Activated CD4-positive, alpha-beta memory T cell treated with anti-CD3 and anti-CD28 coated beads, Interleukin-2, amount 10 ng/mL, durations not matched to agents 7 days and 5 days (primary cell): ENCODE measurements at regions of chr10 and their contacts with region 1.

Region 1: DNA sequence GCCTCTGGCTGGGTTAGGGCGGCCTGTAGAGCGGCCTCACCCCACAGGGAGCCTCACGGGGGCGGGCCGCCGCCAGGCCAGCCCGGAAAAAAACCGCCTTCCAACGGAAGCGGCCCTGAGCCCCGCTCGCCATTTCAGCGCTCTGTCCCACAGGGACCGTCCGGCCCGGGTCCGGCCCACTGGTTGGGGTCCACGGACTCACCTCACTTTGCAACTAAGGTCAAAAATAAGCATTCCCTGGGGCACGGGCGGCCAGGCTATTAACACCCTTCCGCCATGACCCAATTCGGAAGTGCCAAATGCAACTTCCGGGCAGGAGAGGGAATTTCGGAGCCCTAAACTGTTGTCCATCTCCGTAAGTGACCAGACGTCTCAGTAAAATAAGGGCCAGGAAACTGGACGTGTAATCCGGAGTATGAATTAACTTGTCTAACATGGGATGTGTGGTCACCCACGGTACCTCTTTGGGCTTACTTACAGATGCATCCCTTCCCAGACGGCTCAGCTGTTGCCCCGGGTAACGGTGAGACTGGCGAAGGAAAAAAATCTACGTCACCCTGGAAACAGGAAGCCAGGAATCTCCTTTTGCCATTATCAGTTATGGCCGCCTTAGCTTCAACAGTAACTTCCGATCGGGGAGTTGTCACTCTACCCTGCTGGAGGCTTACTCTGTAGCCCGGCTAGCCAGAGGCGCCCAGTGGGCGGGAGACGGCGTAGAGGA is at the start of gene BBIP1:
- DNase-seq: no peak
- H3K4me3 Mint-ChIP-seq: peak within 1 kb of the TSS; percentile 90
- H3K27ac Mint-ChIP-seq: peak within 1 kb of the TSS; percentile 97
- H3K4me1 Mint-ChIP-seq: peaks cover 40% of the 10 kb centered on the region
- H3K27me3 Mint-ChIP-seq: no peaks in the 10 kb centered on the region
- total RNA-seq, gene BBIP1: 24.8 to 30.2 TPM

Region 2: DNA sequence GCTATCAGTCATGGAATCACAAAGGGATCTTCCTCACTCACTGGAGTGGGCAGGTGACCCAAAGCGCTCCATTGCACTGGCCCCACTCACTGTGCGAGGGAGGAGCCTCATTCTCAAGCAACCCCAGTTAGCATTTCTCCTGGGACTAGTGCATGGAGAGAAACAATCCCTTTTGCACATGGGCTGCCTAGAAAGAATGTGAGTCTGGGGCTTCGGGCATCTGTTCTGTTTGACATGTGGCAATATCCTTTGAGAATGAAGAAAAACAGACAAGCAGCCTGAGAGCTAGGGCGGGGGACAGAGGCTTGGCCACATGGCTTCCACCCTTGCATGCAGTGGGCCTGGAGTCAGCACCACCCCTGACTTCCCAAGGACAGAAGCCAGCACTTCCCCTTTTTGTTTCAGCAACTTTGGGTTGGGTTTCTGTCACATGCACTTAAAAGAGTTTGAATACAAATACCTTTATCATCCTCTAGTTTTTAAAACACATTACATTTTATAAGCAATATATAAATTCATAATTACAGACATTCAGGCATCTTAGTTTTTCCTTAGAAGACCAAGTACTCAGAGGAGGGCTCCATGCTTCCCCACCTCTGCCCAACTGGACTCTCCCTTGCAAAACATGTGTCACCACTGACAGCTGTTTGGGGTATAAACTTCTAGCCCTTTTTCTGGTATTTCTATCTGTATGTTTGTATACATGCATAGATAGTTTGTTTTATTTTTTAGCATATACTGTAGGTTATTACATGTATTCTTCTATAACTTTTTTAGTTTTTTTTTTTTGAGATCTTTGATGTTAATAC is 200.8 kb before region 1 on chr10:
- CTCF ChIA-PET with region 1: no interaction called
- POLR2A ChIA-PET with region 1: no interaction called
- DNase-seq: no peak
- H3K4me3 Mint-ChIP-seq: no peak overlapping the region
- H3K27ac Mint-ChIP-seq: no peak overlapping the region
- H3K4me1 Mint-ChIP-seq: no peaks in the 10 kb centered on the region
- H3K27me3 Mint-ChIP-seq: no peaks in the 10 kb centered on the region

Region 3: GRCh38 chr10:110803830-110804338 is 114.9 kb before region 1 on chr10:
- CTCF ChIA-PET with region 1: interaction called, 14 read pairs
- POLR2A ChIA-PET with region 1: interaction called, 11 read pairs
- DNase-seq: peak; percentile 31
- H3K4me3 Mint-ChIP-seq: no peak overlapping the region
- H3K27ac Mint-ChIP-seq: peak overlapping the region; percentile 20
- H3K4me1 Mint-ChIP-seq: peaks cover 35% of the 10 kb centered on the region
- H3K27me3 Mint-ChIP-seq: peaks cover 3% of the 10 kb centered on the region

Region 4: GRCh38 chr10:110864662-110865140 is 54.1 kb before region 1 on chr10:
- CTCF ChIA-PET with region 1: no interaction called
- POLR2A ChIA-PET with region 1: interaction called, 41 read pairs
- DNase-seq: peak; percentile 63
- H3K4me3 Mint-ChIP-seq: peak overlapping the region; percentile 73
- H3K27ac Mint-ChIP-seq: peak overlapping the region; percentile 91
- H3K4me1 Mint-ChIP-seq: peaks cover 92% of the 10 kb centered on the region
- H3K27me3 Mint-ChIP-seq: no peaks in the 10 kb centered on the region

Region 5: DNA sequence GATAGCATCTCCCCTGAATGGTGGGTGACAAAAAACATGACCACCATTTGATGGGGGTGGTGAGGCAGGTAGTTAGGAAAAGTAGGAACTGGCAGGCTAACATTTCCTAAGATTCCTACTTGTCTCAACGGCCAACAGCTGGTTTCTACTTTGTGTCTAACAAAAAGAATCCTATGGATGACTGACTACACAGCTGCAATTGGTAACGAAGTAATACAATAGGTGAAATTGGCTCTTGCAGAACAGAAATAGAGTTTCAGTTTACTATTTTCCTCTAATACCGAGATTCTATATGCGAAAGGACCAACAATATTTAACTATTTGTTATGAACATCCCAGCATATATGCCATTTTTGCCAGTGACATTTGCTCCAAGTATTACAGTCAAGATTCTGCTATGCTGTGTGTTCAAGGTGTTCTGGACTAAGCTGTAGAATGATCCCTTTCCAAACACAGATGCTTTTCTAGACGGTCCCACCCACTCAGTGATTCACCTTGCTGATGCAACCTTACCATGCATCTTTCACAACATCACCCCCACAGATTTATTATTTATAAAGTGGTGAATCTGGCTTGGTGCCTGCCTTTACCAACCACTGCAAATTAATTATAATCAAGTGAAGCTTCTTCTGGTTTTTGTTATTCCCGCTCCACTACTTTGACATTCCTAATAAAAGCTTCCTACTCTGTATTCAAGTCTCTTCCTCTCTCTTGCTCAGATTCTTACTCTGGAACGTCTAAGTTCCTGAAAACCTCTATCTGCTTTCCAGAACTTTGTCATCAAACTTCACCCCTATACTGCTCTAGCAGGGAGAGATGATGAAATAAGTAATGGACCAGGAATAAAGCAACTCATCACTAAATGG is 16.6 kb before region 1 on chr10:
- CTCF ChIA-PET with region 1: interaction called, 10 read pairs
- POLR2A ChIA-PET with region 1: interaction called, 20 read pairs
- DNase-seq: no peak
- H3K4me3 Mint-ChIP-seq: no peak overlapping the region
- H3K27ac Mint-ChIP-seq: peak overlapping the region; percentile 36
- H3K4me1 Mint-ChIP-seq: peaks cover 27% of the 10 kb centered on the region
- H3K27me3 Mint-ChIP-seq: no peaks in the 10 kb centered on the region

Region 6: DNA sequence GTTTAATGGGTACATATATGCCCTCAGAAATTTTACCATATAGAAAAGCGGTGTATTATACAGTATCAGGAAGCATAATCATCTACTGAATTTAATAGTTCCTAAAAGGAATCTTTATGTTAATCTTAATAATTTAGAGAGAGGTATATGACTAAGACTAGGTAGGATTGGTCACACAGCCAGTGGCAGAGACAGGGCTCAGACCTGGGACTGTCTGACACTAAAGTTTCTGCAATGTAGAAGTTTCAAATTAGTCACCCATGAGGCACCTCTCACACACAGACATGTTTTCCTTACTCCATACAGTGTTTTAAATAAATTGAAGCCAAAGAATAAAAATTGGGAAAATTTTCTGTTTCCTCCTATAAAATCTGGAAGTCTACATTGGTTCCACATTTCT is 85.2 kb after region 1 on chr10:
- CTCF ChIA-PET with region 1: no interaction called
- POLR2A ChIA-PET with region 1: no interaction called
- DNase-seq: no peak
- H3K4me3 Mint-ChIP-seq: no peak overlapping the region
- H3K27ac Mint-ChIP-seq: no peak overlapping the region
- H3K4me1 Mint-ChIP-seq: no peaks in the 10 kb centered on the region
- H3K27me3 Mint-ChIP-seq: no peaks in the 10 kb centered on the region